ENCODE measurements at regions of chr4 and their contacts with region 1.

Region 1: DNA sequence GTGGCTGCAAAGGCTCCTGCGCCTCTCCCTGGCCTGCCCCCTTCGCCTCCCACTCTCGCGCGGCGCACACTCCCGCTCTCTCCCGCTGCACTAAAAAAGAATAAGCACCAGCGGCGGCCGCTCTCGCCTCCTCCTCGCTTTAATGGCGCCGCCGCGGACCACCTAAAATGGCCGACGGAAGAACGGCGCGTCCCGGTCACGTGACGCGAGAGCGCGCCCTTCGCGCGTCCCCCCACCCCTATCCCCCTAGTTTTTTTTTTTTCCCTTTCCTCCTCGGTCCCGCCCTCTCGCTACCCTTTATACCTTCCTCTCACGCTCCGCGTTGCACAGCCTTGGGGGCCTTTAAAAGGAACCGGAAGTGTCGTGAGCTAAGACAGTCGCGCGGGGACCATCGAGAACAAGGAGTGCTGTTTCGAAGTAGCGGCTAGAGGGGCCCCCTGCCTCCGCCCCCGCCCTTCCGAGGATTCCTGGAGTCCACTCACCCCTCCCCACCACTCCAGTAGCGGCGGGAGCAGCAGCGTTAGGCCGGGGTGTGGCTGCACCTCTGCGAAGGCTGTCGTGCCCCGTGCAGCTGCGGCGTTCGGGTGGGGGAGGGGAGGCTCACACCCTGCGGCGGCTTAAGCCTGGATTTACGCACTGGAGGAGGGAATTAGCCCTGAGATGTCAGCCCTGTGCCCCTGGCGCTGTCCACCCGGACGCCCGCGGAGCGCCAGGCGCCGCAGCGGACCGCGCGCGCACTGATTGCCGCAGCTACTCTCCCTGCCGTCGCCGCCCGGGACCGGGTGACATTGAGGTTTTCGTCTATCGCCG is at the start of gene HNRNPD:
- DNase-seq: peak; percentile 100
- H3K4me3 ChIP-seq: peak within 1 kb of the TSS; percentile 97 to 99 (median 98)
- H3K27ac ChIP-seq: peak within 1 kb of the TSS; percentile 99 to 100 (median 100)
- H3K4me1 ChIP-seq: peaks cover 0 to 49% (median 44%) of the 10 kb centered on the region in 4 donors
- H3K27me3 ChIP-seq: no peaks in the 10 kb centered on the region
- CTCF ChIP-seq: no peak
- EP300 ChIP-seq: peak in 2 of 4 donors; percentile 13 to 21
- POLR2A ChIP-seq: peak; percentile 91 to 92
- total RNA-seq, gene HNRNPD: 64.6 to 124 (median 78.0) TPM

Region 2: GRCh38 chr4:81030061-81030980 is 1343.7 kb before region 1 on chr4 and contains the start of gene BMP3:
- intact Hi-C with region 1: loop called (anchors 10 kb)
- DNase-seq: peak; percentile 86
- H3K4me3 ChIP-seq: peak within 1 kb of the TSS; percentile 56 to 77 (median 66)
- H3K27ac ChIP-seq: peak within 1 kb of the TSS; percentile 65 to 86 (median 82)
- H3K4me1 ChIP-seq: peaks cover 0 to 15% (median 5%) of the 10 kb centered on the region in 4 donors
- H3K27me3 ChIP-seq: peaks cover 0 to 15% (median 0%) of the 10 kb centered on the region in 3 donors
- CTCF ChIP-seq: no peak
- EP300 ChIP-seq: no peak
- POLR2A ChIP-seq: peak; percentile 31 to 42
- total RNA-seq, gene BMP3: 30.5 to 63.1 (median 40.7) TPM

Region 3: GRCh38 chr4:82428969-82429727 is 55.1 kb after region 1 on chr4:
- intact Hi-C with region 1: loop called (anchors 1 kb)
- DNase-seq: peak; percentile 96
- H3K4me3 ChIP-seq: peak overlapping the region; percentile 69 to 95 (median 88)
- H3K27ac ChIP-seq: peak overlapping the region; percentile 93 to 97 (median 95)
- H3K4me1 ChIP-seq: peaks cover 0 to 46% (median 44%) of the 10 kb centered on the region in 4 donors
- H3K27me3 ChIP-seq: no peaks in the 10 kb centered on the region
- CTCF ChIP-seq: peak; percentile 48 to 96 (median 74)
- EP300 ChIP-seq: no peak
- POLR2A ChIP-seq: peak; percentile 73 to 82

Region 4: GRCh38 chr4:82890901-82891706 is 517.1 kb after region 1 on chr4 and contains the start of gene SEC31A:
- intact Hi-C with region 1: loop called (anchors 5 kb)
- DNase-seq: peak; percentile 97
- H3K4me3 ChIP-seq: peak within 1 kb of the TSS; percentile 85 to 98 (median 88)
- H3K27ac ChIP-seq: peak within 1 kb of the TSS; percentile 98 to 99 (median 98)
- H3K4me1 ChIP-seq: peaks cover 0 to 39% (median 30%) of the 10 kb centered on the region in 4 donors
- H3K27me3 ChIP-seq: no peaks in the 10 kb centered on the region
- CTCF ChIP-seq: peak in 1 of 4 experiments; percentile 16
- EP300 ChIP-seq: peak in 2 of 4 donors; percentile 53 to 71
- POLR2A ChIP-seq: peak; percentile 89 to 92
- total RNA-seq, gene SEC31A: 121 to 197 (median 132) TPM

Region 5: DNA sequence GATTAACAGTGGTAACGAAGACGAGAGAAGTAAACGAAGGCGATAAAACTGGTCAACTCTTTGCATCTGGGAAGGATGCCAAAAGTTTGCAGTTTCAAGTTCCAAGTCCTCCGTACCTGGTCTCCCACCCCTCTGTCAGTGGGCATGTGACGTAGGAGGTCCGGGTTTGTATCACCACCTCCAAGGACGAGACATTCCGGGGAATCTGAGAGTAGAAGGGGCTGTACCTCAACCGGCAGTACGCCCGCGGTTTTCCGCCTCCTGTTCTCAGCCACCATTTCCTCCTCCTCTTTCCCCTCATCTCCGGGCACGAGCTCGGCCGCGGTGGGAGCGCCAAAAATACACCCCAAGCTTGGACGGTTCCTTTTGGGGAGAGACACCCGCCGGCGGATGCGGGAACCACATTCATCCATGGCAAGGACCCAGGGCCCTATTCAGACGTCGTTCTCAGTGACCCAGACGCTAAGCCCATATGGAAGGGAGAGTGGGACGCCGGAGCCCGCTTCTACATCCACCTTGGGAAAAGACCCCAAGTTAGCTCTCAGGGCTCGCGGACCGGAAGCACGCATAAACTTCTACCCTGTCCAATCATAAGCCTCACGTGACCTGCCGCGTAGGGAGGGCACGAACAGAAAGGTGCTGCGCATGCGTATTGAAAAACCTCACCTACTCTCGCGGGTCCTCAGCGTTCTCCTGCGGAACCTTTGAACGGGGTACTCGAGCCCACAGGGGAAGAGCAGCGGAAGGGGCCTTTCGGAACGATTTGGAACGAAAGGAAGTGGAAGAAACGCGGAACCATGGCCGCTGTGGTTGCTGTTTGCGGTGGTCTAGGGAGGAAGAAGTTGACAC is 1081.5 kb after region 1 on chr4 and contains the starts of genes HELQ and MRPS18C:
- intact Hi-C with region 1: loop called (anchors 10 kb)
- DNase-seq: peak; percentile 99
- H3K4me3 ChIP-seq: peak within 1 kb of the TSS; percentile 80 to 86 (median 84)
- H3K27ac ChIP-seq: peak within 1 kb of the TSS; percentile 96 to 99 (median 98)
- H3K4me1 ChIP-seq: peaks cover 0 to 32% (median 22%) of the 10 kb centered on the region in 4 donors
- H3K27me3 ChIP-seq: no peaks in the 10 kb centered on the region
- CTCF ChIP-seq: peak in 2 of 4 experiments; percentile 13 to 48
- EP300 ChIP-seq: peak in 1 of 4 donors; percentile 20
- POLR2A ChIP-seq: peak; percentile 45 to 66
- total RNA-seq, gene HELQ: 11.8 to 21.8 (median 18.9) TPM
- total RNA-seq, gene MRPS18C: 8.3 to 36.2 (median 17.4) TPM